ENCODE measurements at regions of chr1 and their contacts with region 1.

Region 1: GRCh38 chr1:28886731-28887418 is 27.5 kb upstream of the EPB41 start:
- DNase-seq: peak; percentile 87 to 92 (median 91)
- H3K4me3 ChIP-seq: peak overlapping the region; percentile 84 to 95 (median 92)
- H3K27ac ChIP-seq: peak overlapping the region; percentile 81 to 89
- H3K4me1 ChIP-seq: peaks cover 17 to 59% (median 48%) of the 10 kb centered on the region in 4 experiments
- H3K27me3 ChIP-seq: no peaks in the 10 kb centered on the region

Region 2: DNA sequence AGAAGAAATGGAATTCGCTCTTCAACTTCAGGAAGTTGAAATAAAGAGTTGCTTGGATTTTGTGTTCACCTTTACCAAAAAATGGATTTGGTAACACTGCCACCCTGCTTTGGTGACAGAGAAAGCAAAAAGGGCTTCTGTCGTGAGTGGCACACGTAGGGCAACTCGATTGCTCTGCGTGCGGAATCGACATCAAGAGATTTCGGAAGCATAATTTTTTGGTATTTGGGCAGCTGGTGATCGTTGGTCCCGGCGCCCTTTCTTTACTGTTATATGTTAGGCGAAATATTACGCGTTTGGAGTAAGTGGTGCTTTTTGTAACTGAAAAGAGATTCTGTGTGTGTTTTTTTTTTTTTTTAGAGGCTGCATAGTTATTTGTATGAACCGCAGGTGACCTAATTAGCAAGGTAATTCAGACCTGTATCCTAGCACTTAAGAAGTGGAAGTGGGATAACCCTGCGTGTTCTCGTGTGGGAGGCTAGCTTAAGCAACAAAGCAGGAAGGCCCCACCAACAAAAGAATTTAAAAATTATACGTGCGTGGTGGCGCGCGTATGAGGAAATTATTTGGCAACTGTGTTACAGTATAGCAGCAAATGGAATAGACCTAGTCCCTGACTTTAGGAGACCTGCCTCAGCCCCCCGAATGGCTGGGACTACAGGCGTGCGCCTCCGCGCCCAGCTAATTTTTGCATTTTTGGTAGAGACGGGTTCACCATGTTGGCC is 238.2 kb before region 1 on chr1 and contains the start of gene RNU11:
- CTCF ChIA-PET with region 1: no interaction called
- POLR2A ChIA-PET with region 1: interaction called, 12 read pairs
- DNase-seq: peak; percentile 98 to 99 (median 99)
- H3K4me3 ChIP-seq: peak within 1 kb of the TSS; percentile 7 to 79 (median 57)
- H3K27ac ChIP-seq: peak within 1 kb of the TSS; percentile 100
- H3K4me1 ChIP-seq: peaks cover 4 to 30% (median 24%) of the 10 kb centered on the region in 4 experiments
- H3K27me3 ChIP-seq: no peaks in the 10 kb centered on the region

Region 3: DNA sequence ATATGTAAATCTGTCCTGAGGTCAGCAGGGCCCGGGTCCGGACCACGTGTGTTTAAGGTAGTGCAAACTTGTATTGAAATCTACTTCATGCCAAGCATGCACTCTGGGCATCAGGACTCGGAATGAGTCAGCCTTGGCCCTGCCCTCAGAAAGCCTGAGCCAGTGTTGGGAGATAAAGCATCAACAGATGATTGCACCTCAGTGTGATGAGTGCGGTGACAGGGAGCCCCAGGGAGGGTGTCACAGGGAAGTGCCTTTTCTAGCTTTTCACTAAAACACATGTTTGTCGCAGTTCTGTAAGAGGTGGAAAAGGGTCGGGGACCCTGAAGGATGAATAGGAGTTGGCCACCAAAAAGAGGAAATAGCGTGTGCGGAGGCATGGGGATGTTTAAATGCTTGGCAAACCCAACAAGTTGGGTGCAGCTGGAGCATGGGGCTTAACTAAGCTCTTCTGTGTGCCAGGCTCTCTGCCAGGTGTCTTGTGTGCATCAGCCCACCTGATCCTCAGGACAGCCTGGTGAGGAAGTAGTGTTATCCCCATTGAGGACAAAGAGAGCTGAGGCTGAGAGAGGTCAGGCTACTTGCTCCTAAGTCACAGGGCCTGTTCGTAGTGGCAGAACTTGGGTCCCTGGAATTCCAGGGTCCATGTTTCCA is 20.8 kb before region 1 on chr1:
- CTCF ChIA-PET with region 1: no interaction called
- POLR2A ChIA-PET with region 1: no interaction called
- DNase-seq: no peak
- H3K4me3 ChIP-seq: no peak overlapping the region
- H3K27ac ChIP-seq: no peak overlapping the region
- H3K4me1 ChIP-seq: no peaks in the 10 kb centered on the region
- H3K27me3 ChIP-seq: peaks cover 0 to 7% (median 0%) of the 10 kb centered on the region in 5 experiments

Region 4: GRCh38 chr1:28926629-28927265 is 39.9 kb after region 1 on chr1:
- CTCF ChIA-PET with region 1: interaction called, 5 read pairs
- POLR2A ChIA-PET with region 1: interaction called, 12 read pairs
- DNase-seq: peak; percentile 91 to 99 (median 97)
- H3K4me3 ChIP-seq: peak overlapping the region in 5 of 7 experiments; percentile 15 to 66 (median 56)
- H3K27ac ChIP-seq: peak overlapping the region; percentile 75 to 90
- H3K4me1 ChIP-seq: peaks cover 26 to 42% (median 36%) of the 10 kb centered on the region in 4 experiments
- H3K27me3 ChIP-seq: no peaks in the 10 kb centered on the region

Region 5: DNA sequence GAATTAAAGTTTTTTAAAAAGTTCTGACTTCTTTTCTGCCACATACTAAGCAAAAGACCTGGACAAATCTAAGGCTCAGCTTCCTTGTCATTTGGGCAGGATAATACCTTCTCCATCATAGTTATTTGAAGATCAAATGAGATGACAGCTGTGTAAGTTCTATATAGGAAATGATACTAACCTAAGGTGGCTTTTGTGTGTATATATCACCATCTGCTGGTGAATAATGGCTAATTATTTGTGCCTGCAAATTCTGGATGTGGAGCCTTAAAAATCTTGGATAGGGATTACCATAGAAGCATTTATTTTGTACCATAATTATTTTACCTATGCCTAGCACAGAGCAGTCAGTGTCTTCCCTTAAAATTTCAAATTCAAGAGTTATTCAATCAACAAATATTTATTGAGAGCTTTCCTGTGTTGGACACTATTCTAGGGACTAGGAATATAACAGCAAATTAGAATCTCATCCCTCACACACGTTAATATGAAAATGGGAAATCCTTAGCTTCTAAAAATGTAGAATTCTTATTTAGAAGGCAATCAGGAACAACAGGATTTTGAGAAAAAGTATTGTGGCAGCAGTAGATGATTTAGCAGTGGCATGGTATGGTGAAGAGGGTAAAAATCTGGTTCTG is 147.1 kb after region 1 on chr1:
- CTCF ChIA-PET with region 1: interaction called, 300 read pairs
- POLR2A ChIA-PET with region 1: interaction called, 7 read pairs
- DNase-seq: peak; percentile 47 to 67 (median 66)
- H3K4me3 ChIP-seq: no peak overlapping the region
- H3K27ac ChIP-seq: no peak overlapping the region
- H3K4me1 ChIP-seq: peaks cover 0 to 12% (median 6%) of the 10 kb centered on the region in 4 experiments
- H3K27me3 ChIP-seq: no peaks in the 10 kb centered on the region

Region 6: GRCh38 chr1:29043274-29043965 is 156.5 kb after region 1 on chr1:
- CTCF ChIA-PET with region 1: interaction called, 18 read pairs
- POLR2A ChIA-PET with region 1: interaction called, 3 read pairs
- DNase-seq: no peak
- H3K4me3 ChIP-seq: no peak overlapping the region
- H3K27ac ChIP-seq: no peak overlapping the region
- H3K4me1 ChIP-seq: no peaks in the 10 kb centered on the region
- H3K27me3 ChIP-seq: no peaks in the 10 kb centered on the region

Region 7: GRCh38 chr1:29202584-29203340 is 315.9 kb after region 1 on chr1:
- CTCF ChIA-PET with region 1: interaction called, 14 read pairs
- POLR2A ChIA-PET with region 1: no interaction called
- DNase-seq: peak; percentile 88 to 94 (median 93)
- H3K4me3 ChIP-seq: no peak overlapping the region
- H3K27ac ChIP-seq: peak overlapping the region in 1 of 2 experiments; percentile 16
- H3K4me1 ChIP-seq: peaks cover 5 to 19% (median 13%) of the 10 kb centered on the region in 4 experiments
- H3K27me3 ChIP-seq: no peaks in the 10 kb centered on the region

Measured in common myeloid progenitor, CD34-positive (primary cell).